ENCODE measurements at regions of chr2 and their contacts with region 1.

Region 1: DNA sequence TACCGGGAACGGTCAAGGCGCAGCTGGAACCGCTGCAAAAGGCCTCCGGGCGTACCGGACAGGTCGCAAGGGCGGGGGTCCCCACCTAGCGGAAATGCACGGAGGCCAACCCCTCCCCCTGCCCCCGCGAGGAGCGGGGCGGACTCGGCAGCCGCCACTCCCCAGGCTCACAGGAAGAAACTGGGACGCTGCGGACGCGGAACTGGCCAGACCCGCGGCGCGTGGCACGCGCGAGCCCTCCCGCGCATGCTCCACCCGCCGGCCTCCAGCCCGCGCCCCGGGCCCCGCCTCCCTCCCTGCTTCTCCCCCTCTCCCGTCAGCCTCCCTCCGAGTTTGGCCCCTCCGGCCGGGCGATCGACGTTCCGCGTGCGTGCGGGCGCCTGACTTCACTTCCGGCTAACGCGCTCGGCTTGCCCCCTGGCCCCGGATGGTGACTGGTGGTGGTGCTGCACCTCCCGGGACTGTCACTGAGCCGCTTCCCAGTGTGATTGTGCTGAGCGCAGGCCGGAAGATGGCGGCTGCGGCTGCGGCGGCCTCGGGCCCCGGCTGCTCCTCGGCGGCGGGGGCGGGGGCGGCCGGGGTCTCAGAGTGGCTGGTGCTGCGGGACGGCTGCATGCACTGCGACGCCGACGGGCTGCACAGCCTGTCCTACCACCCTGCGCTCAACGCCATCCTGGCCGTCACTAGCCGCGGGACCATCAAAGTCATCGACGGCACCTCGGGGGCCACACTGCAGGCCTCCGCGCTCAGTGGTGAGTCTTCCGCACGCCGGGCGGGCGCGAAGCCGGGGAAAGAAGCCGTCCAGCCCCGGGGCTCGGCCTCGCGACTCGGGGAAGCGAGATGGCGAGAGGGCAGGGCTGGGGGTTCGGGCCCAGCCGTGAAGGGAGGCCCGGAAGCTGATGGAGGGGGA is at the start of gene BIRC6:
- DNase-seq: peak; percentile 93 to 99
- H3K4me3 ChIP-seq: peak within 1 kb of the TSS; percentile 67 to 99
- H3K27ac ChIP-seq: peak within 1 kb of the TSS; percentile 90 to 100
- H3K4me1 ChIP-seq: peaks cover 0 to 30% of the 10 kb centered on the region in 2 donors
- H3K27me3 ChIP-seq: no peaks in the 10 kb centered on the region
- CTCF ChIP-seq: no peak
- total RNA-seq, gene BIRC6: 59.4 TPM

Region 2: GRCh38 chr2:32063310-32064161 is 293.5 kb before region 1 on chr2 and contains the start of gene SPAST:
- intact Hi-C with region 1: loop called (anchors 5 kb)
- DNase-seq: peak; percentile 89 to 99
- H3K4me3 ChIP-seq: peak within 1 kb of the TSS; percentile 78 to 91
- H3K27ac ChIP-seq: peak within 1 kb of the TSS; percentile 87 to 92
- H3K4me1 ChIP-seq: peaks cover 0 to 5% of the 10 kb centered on the region in 2 donors
- H3K27me3 ChIP-seq: no peaks in the 10 kb centered on the region
- CTCF ChIP-seq: peak; percentile 57 to 77 (median 63)
- total RNA-seq, gene SPAST: 12.1 TPM

Region 3: GRCh38 chr2:32168513-32168912 is 188.5 kb before region 1 on chr2:
- intact Hi-C with region 1: loop called (anchors 1 kb)
- DNase-seq: no peak
- H3K4me3 ChIP-seq: no peak overlapping the region
- H3K27ac ChIP-seq: no peak overlapping the region
- H3K4me1 ChIP-seq: peaks cover 0 to 5% of the 10 kb centered on the region in 2 donors
- H3K27me3 ChIP-seq: no peaks in the 10 kb centered on the region
- CTCF ChIP-seq: no peak

Region 4: GRCh38 chr2:32277674-32278482 is 79.1 kb before region 1 on chr2 and contains the start of gene YIPF4:
- intact Hi-C with region 1: loop called (anchors 2 kb)
- DNase-seq: peak; percentile 73 to 94
- H3K4me3 ChIP-seq: peak within 1 kb of the TSS; percentile 89 to 99
- H3K27ac ChIP-seq: peak within 1 kb of the TSS; percentile 81 to 85
- H3K4me1 ChIP-seq: peaks cover 3 to 4% of the 10 kb centered on the region in 2 donors
- H3K27me3 ChIP-seq: no peaks in the 10 kb centered on the region
- CTCF ChIP-seq: no peak
- total RNA-seq, gene YIPF4: 9.2 TPM

Region 5: GRCh38 chr2:32425719-32426141 is 68.7 kb after region 1 on chr2:
- intact Hi-C with region 1: loop called (anchors 5 kb)
- DNase-seq: no peak
- H3K4me3 ChIP-seq: peak overlapping the region; percentile 21 to 48
- H3K27ac ChIP-seq: peak overlapping the region; percentile 80 to 82
- H3K4me1 ChIP-seq: peaks cover 0 to 54% of the 10 kb centered on the region in 2 donors
- H3K27me3 ChIP-seq: no peaks in the 10 kb centered on the region
- CTCF ChIP-seq: no peak

Region 6: GRCh38 chr2:32453242-32454062 is 96.5 kb after region 1 on chr2:
- intact Hi-C with region 1: no loop called
- DNase-seq: no peak
- H3K4me3 ChIP-seq: no peak overlapping the region
- H3K27ac ChIP-seq: no peak overlapping the region
- H3K4me1 ChIP-seq: no peaks in the 10 kb centered on the region
- H3K27me3 ChIP-seq: no peaks in the 10 kb centered on the region
- CTCF ChIP-seq: no peak

Region 7: DNA sequence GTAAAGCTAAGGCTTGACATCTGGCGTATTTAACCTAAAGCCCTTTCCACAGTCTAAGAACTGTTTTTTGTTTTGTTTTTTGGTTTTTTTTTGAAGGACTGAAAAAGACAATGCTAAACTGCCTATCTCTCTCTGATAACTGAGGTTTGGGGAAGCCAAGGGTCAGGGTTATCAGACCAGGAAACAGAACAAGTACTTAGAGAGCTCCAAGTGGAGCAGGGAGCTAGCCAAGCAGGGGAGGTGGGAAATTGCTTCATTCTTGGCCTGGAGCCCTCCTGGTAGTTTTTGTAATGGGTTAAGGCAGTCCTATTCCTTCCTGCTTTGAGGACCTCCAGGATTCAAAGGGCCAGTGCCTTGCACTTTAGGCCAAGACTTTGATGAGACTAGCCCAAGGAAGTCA is 435.4 kb after region 1 on chr2:
- intact Hi-C with region 1: no loop called
- DNase-seq: no peak
- H3K4me3 ChIP-seq: no peak overlapping the region
- H3K27ac ChIP-seq: no peak overlapping the region
- H3K4me1 ChIP-seq: no peaks in the 10 kb centered on the region
- H3K27me3 ChIP-seq: no peaks in the 10 kb centered on the region
- CTCF ChIP-seq: no peak

Region 8: DNA sequence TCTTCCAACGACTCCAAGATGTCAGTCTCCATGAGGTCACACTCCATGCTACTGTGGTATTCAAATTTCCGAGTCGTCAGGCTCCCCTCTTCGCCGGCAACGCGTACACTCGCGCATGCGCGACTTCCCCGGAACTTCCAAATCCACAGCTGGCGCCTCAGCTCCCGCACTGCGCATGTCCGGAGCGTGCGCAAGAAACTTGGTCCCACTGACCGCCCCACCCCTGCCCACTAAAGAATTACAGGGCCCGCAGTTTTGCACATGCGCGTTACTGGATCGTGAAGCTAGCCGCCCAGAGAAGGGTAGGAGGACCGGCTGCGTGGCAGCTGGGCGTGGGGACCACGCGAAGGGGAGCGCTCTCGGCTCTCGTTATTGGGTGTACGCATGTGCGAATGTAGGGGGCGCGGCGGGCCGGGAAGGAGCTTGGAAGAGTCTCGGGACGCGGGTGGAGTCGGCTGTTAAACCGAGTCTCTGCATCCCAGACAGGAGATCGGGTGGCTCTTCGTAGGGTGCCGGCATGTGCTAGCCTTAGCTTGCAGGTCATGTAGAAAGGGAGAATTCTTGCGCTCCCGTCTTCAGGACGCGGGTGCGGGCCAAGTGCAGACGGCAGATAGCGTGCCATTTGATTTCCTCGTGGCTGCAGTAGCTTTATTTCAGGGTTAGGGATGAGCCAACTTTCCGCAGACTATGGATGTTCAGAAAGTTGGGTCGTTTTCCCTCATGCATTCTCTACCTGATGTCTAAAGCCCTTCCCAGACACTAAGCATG is 1242.4 kb after region 1 on chr2 and contains the start of gene FAM98A:
- intact Hi-C with region 1: loop called (anchors 5 kb)
- DNase-seq: peak; percentile 93 to 99
- H3K4me3 ChIP-seq: peak within 1 kb of the TSS; percentile 67 to 100
- H3K27ac ChIP-seq: peak within 1 kb of the TSS; percentile 80 to 90
- H3K4me1 ChIP-seq: peaks cover 3 to 10% of the 10 kb centered on the region in 2 donors
- H3K27me3 ChIP-seq: no peaks in the 10 kb centered on the region
- CTCF ChIP-seq: no peak
- total RNA-seq, gene FAM98A: 34.8 TPM

Measured in ascending aorta (tissue), 2 donors.